ENCODE measurements at regions of chrX and their contacts with region 1.

Region 1: GRCh38 chrX:110748256-110748806 is 47.3 kb downstream of the CHRDL1 start:
- DNase-seq: no peak
- ATAC-seq: no peak
- H3K4me3 ChIP-seq: no peak overlapping the region
- H3K27ac ChIP-seq: no peak overlapping the region
- H3K4me1 ChIP-seq: no peaks in the 10 kb centered on the region
- H3K27me3 ChIP-seq: no peaks in the 10 kb centered on the region
- CTCF ChIP-seq: no peak

Region 2: DNA sequence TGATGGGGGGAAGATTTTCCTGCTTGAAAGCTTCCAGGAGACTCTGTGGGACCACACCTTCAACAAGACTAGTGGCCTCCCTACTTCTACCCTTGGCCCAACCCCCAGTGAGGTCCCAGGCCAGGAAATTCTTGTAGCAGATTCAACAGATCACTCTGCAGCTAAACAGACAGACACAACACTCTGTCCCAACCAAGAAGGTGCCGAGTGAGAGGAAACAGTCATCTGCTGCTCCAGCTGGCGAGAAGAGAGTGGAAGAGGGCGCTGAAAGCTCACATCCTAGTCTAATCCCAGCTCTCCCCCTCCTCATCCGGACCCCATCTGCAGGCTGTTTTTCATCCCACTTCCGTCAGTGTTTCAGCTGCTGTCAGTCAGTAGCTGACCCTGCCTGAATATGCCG is 16.1 kb before region 1 on chrX:
- CTCF ChIA-PET with region 1: no interaction called
- POLR2A ChIA-PET with region 1: no interaction called
- in situ Hi-C with region 1: no loop called
- intact Hi-C with region 1: loop called (anchors 2 kb)
- DNase-seq: no peak
- ATAC-seq: no peak
- H3K4me3 ChIP-seq: no peak overlapping the region
- H3K27ac ChIP-seq: no peak overlapping the region
- H3K4me1 ChIP-seq: no peaks in the 10 kb centered on the region
- H3K27me3 ChIP-seq: no peaks in the 10 kb centered on the region
- CTCF ChIP-seq: no peak

Measured in Panc1 (cell line).